ENCODE measurements at regions of chr14 and their contacts with region 1.

Region 1: DNA sequence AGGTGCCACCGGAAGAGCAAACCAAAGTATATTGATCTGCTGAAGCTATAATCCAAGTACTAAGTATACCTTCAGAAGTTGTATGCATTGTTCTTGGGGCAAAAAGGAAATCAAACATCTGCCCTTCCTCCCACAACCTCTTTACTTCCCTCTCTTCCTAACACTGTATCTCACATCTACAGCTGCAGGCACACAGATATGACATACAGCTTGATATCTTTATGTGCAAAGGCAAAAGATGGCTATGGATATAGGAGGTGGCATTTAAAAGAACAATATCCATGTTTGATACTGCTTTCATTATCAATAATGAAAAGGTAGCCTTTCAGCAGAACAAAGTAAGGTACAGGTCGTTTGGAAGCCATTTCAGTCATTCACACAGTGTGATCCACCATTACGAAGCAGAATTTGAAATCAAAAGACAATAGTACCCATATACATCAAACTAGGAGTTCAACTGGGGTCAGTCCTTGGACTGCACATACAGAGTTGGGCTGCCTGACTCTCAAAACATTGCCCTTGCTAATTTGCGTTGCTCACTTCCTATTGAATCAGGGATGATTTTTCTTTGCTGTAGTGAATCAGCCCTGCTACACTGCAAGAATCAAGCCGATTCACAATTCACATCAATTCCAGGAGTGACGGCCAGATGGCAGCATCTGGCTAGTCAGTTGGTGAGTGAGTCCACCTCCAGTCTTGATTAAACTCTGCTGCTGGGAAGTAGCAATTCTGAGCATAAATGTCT is 8.9 kb downstream of the ANG start:
- DNase-seq: peak; percentile 83
- H3K4me3 Mint-ChIP-seq: no peak overlapping the region
- H3K27ac Mint-ChIP-seq: no peak overlapping the region
- H3K4me1 Mint-ChIP-seq: no peaks in the 10 kb centered on the region
- H3K27me3 Mint-ChIP-seq: no peaks in the 10 kb centered on the region

Region 2: GRCh38 chr14:20632682-20633428 is 64.6 kb before region 1 on chr14:
- CTCF ChIA-PET with region 1: no interaction called
- intact Hi-C with region 1: no loop called
- DNase-seq: peak; percentile 83
- H3K4me3 Mint-ChIP-seq: peak overlapping the region; percentile 79
- H3K27ac Mint-ChIP-seq: peak overlapping the region; percentile 89
- H3K4me1 Mint-ChIP-seq: peaks cover 35% of the 10 kb centered on the region
- H3K27me3 Mint-ChIP-seq: peaks cover 34% of the 10 kb centered on the region

Region 3: DNA sequence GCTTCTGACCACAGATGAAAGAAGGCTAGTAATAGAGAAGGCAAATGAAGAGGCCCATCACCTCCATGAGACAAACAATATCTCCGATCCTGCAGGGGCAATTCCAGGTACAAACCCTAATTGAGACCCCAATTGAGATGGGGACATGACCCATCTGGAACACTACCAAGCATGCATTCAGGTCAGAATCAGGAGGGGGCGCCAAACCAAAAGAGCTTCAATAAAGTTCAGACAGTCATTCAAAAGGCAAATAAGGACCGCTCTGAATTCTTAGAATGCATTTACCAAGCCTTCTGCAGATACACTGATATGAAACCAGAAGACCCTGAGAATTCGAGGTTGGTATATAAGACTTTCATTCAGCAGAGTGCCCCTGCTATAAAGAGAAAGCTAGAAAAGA is 60.5 kb after region 1 on chr14:
- CTCF ChIA-PET with region 1: no interaction called
- intact Hi-C with region 1: loop called (anchors 2 kb)
- DNase-seq: peak; percentile 62
- H3K4me3 Mint-ChIP-seq: no peak overlapping the region
- H3K27ac Mint-ChIP-seq: no peak overlapping the region
- H3K4me1 Mint-ChIP-seq: no peaks in the 10 kb centered on the region
- H3K27me3 Mint-ChIP-seq: no peaks in the 10 kb centered on the region

Region 4: GRCh38 chr14:20782280-20782890 is 84.9 kb after region 1 on chr14:
- CTCF ChIA-PET with region 1: interaction called, 4 read pairs
- intact Hi-C with region 1: loop called (anchors 5 kb)
- DNase-seq: peak; percentile 52
- H3K4me3 Mint-ChIP-seq: peak overlapping the region; percentile 63
- H3K27ac Mint-ChIP-seq: peak overlapping the region; percentile 46
- H3K4me1 Mint-ChIP-seq: peaks cover 22% of the 10 kb centered on the region
- H3K27me3 Mint-ChIP-seq: no peaks in the 10 kb centered on the region

Region 5: DNA sequence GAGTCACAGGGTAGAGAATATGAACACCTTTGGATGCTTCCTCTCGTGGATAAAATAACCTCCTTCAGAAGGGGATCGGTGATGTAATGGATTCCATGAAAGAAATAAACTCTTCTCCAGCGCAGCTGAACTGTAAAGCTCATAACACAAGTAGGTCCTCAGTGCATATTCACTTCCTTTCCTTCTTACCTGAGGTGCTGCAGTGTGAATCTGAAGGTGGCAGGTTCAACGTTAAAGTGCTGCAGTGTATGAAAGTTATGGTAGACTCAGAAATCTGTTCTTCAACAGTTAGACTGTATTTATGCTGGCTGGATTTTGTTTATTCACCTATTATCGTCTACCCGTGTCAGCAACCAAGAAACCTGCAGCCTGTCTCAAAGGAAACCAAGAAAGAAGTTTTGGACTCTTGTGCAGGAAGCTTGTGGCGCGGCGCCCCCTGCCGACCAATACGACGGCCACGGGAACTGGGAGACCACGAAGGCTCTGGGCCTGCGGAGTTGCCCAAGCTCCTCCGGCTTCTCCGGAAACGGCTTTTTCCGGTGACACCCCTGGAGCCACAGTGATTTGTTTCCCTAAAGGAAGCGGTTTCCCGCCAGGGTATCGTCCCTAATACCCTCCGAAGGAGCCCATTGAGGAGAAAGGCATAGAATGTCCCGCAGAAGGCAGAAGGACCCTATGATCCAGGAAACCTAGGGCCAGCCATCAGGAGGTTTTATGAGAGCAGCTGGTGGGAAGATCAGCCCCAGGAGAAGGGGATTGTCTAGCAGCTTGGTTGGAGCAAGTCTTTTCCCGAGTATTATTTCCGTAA is 176.1 kb after region 1 on chr14:
- CTCF ChIA-PET with region 1: interaction called, 29 read pairs
- intact Hi-C with region 1: loop called (anchors 1 kb)
- DNase-seq: peak; percentile 93
- H3K4me3 Mint-ChIP-seq: peak overlapping the region; percentile 34
- H3K27ac Mint-ChIP-seq: no peak overlapping the region
- H3K4me1 Mint-ChIP-seq: peaks cover 10% of the 10 kb centered on the region
- H3K27me3 Mint-ChIP-seq: peaks cover 6% of the 10 kb centered on the region

Measured in activated naive CD4-positive, alpha-beta T cell treated with anti-CD3 and anti-CD28 coated beads for 36 hours (primary cell).